Right ventricle myocardium inferior (tissue), 1 donor: ENCODE measurements at regions of chr7 and their contacts with region 1.

Region 1: DNA sequence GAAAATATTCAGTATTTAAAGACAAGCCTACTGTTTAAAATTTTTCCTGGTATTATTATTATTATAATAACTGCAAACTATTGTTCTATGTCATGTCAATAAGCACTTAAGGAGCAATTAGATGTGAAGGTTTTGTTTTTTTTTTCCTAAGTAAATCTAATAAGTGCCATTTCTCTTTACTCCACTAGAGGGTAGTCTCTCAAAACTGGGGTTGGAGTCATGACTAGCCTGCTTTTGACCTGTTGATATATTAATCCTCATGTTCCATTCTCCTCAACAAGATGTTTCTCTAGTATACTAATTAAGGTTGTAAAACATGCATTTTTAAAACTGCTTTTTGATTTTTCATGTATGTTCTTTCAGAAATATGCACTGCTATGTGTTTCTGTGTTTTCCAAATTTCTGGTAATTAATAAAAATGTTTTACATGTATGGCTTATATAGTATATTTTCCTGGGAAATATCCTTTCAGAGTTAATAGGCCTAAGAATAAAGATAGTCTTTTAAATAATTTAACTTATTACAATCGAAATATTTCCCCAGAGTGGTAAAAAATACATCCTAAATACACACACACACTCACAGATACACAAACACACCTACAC is 1.0 kb upstream of the LRRN3 start:
- DNase-seq: no peak
- ATAC-seq: no peak

Region 2: DNA sequence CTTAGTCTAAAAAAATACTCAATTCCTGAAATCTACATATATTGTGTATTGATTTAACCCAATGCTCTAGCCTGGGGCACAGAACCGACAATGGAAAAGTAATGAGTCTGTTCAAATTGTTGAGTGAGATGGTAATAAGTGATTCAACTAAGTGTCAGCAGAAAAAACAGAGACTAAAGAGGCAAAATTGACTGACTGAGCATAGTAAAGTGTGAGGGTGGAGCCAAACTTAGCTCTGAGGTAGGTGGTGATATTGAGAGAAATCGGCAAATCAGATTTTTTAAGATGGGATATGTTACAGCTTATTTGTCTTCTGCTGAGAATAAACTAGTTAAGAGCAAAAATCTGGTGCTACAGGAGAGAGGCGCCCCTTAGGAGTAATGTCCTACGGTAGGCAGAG is 763.0 kb before region 1 on chr7:
- intact Hi-C with region 1: no loop called
- DNase-seq: no peak
- ATAC-seq: no peak

Region 3: DNA sequence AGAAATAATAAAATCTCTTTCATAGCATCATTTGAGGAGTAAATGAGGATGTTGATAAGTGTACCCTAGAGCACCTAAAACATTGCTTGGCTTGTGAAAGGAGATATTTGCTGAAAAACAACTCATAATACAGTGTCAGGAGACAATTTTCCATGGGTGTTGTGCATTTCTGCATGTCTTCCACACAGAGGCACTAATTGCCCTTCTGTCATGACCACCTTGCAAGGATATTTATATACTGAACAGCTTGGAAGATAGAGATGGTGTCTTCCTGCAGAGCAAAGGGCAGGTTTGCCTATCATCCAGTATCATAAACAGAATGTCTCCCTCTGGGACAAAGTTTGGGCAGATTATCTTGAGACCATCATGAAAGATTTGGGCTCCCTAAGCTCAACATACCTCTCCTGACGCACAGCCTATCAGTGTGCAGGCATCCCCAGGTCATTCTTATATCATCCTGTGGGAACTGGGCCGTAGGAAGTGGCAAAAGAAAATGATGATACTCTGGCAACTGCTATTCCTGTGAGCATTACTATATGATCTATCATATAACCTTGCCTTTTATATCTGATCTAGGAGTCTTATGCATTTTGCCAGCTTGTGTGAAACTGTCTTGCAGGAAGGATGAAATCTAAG is 494.1 kb before region 1 on chr7:
- intact Hi-C with region 1: loop called (anchors 5 kb)
- DNase-seq: no peak
- ATAC-seq: no peak

Region 4: GRCh38 chr7:111274857-111275256 is 184.9 kb after region 1 on chr7:
- intact Hi-C with region 1: no loop called
- DNase-seq: no peak
- ATAC-seq: no peak

Region 5: DNA sequence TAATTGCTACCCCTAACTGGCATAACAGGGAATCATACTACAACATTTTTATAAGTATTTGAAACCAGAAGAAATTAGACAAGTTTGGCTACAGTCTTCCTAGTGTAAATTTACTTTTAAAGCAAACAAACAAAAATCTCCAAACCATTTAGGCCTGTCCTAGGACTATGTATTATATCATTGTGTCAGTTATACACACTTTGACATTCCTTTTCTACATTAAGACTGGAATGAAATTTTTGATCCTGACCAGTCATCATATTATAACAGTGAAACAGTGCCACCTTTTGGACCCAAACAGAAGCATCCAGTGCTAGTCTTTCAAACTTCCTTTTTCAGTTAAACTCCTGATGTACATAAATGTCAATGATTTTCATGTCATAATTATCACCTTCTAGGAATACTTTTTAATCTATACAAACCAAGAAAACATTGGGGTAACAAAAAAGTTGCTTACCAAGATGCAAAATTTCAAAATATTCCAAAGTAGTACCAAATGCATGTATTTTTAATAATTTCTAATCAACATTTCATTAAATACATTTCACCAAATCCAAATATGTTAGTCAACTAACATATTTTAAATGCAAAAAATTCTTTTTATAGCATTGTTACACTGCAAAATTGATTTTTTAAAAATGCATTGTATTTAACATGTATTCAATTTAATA is 396.7 kb after region 1 on chr7:
- intact Hi-C with region 1: loop called (anchors 2 kb)
- DNase-seq: no peak
- ATAC-seq: no peak